ENCODE measurements at regions of chr2 and their contacts with region 1.

Region 1: DNA sequence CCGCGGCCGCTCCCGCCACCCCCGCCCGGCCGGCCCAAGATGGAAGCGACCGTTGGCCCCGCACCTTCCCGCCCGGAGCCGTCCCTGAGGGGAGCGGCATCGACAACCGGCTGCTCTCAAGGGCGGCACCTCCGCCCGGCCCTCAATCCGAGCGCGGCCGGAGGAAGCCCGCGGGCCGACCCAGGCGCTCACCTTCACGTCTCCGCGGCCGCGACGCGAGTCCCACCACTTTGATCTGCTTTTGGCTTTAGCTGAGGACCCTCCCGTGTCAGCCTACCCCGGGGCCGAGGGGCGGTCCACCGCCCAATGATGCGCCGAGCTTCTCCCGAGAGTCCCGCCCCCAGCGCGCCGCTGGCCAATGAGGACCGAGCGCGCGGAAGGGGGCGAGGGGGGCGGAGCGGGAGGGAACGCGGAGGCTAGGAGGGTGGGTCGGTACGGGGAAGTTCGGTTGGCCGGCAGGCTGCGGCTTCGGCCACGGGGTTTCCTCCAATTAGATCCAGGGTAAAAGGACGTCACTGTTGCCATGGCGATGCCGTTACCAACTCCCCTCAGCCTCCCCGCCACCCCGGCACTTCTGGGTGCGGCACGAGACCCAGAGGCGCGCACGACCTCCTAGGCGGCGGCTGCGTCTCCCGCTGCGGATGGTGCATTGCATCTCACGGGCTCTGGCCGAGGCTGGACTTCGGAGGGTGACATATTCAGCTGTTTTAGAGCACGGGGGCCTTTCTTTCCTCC is at the start of gene YWHAQ:
- DNase-seq: peak; percentile 97 to 98 (median 97)
- H3K4me3 ChIP-seq: peak within 1 kb of the TSS; percentile 45 to 86
- H3K4me3 Mint-ChIP-seq: peak within 1 kb of the TSS; percentile 94 to 98 (median 96)
- H3K27ac ChIP-seq: peak within 1 kb of the TSS; percentile 86
- H3K27ac Mint-ChIP-seq: peak within 1 kb of the TSS; percentile 96 to 98 (median 98)
- H3K4me1 ChIP-seq: peaks cover 46% of the 10 kb centered on the region
- H3K4me1 Mint-ChIP-seq: peaks cover 37 to 58% (median 46%) of the 10 kb centered on the region in 4 donors
- H3K27me3 ChIP-seq: no peaks in the 10 kb centered on the region
- H3K27me3 Mint-ChIP-seq: no peaks in the 10 kb centered on the region
- total RNA-seq, gene YWHAQ: 124 TPM

Region 2: DNA sequence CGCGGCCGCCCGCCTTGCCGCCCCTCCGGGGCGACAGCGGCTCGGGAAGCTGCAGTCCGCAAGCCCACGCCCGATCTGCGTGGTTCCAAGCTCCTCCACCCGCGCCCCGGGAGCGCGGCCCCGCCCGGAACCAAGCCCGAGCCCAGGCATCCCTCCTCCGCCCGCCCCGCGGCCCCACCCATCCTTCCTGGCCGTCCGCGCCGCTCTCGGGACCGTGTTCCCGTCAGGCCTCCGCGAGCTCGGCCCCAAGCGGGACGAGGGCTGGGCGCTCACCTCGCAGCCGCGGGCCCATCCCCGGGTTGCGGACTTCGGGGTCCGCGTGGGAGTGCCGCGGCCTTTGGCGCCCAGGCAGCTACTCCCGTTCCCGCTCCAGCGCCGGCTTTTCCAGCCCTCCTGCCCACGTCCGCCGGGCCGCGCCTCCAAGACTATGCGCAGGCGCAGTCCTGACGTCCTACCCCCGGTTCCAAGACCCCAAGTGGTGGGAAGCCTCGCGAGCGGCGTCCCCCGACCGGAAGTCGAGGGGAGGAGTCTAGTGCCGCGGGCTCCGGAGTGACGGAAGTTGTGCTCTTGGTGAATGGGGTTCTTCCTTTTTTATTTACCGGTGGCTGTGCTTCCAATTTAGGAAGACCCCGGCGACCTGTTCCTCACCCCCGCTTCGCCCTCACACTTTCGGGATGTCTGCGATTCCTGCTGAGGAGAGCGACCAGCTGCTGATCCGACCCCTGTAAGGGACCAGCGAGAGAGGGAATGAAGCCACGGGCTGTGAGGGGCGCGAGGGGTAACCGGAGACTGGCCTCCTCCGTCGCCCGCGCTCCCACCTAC is 207.6 kb before region 1 on chr2 and contains the starts of genes CPSF3 and ITGB1BP1:
- CTCF ChIA-PET with region 1: no interaction called
- POLR2A ChIA-PET with region 1: interaction called, 14 read pairs
- intact Hi-C with region 1: loop called (anchors 1 kb)
- DNase-seq: peak; percentile 93 to 95 (median 94)
- H3K4me3 ChIP-seq: peak within 1 kb of the TSS; percentile 77 to 97
- H3K4me3 Mint-ChIP-seq: peak within 1 kb of the TSS in 5 of 8 donors; percentile 91 to 93 (median 91)
- H3K27ac ChIP-seq: peak within 1 kb of the TSS; percentile 88
- H3K27ac Mint-ChIP-seq: peak within 1 kb of the TSS in 6 of 7 donors; percentile 85 to 95 (median 94)
- H3K4me1 ChIP-seq: peaks cover 43% of the 10 kb centered on the region
- H3K4me1 Mint-ChIP-seq: peaks cover 24 to 30% (median 28%) of the 10 kb centered on the region in 4 donors
- H3K27me3 ChIP-seq: no peaks in the 10 kb centered on the region
- H3K27me3 Mint-ChIP-seq: no peaks in the 10 kb centered on the region
- total RNA-seq, gene CPSF3: 20.9 to 22.4 TPM
- total RNA-seq, gene ITGB1BP1: 55.1 to 55.8 TPM

Region 3: DNA sequence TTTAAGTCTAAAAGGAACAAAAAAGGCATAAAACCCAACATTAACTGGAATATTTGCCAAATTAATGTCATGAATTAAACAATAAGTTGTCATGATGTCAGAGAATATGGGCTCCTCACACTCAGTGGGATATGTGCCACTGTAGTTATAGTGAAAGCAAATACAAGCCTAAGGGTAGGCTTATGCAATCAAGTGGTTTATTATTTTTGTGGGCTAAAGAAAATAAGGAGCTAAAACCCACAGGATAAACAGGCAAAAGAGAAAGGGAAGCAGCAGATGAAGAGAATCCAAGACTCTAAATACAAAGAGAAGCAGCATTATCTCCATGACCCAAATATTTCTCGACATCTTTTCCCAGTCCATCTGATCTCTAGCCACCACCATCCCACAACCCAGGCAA is 17.6 kb before region 1 on chr2:
- CTCF ChIA-PET with region 1: interaction called, 3 read pairs
- POLR2A ChIA-PET with region 1: interaction called, 87 read pairs
- intact Hi-C with region 1: loop called (anchors 2 kb)
- DNase-seq: no peak
- H3K4me3 ChIP-seq: no peak overlapping the region
- H3K4me3 Mint-ChIP-seq: peak overlapping the region in 1 of 8 donors; percentile 39
- H3K27ac ChIP-seq: no peak overlapping the region
- H3K27ac Mint-ChIP-seq: peak overlapping the region in 3 of 7 donors; percentile 14 to 63 (median 22)
- H3K4me1 ChIP-seq: peaks cover 85% of the 10 kb centered on the region
- H3K4me1 Mint-ChIP-seq: peaks cover 71 to 98% (median 86%) of the 10 kb centered on the region in 4 donors
- H3K27me3 ChIP-seq: no peaks in the 10 kb centered on the region
- H3K27me3 Mint-ChIP-seq: no peaks in the 10 kb centered on the region

Region 4: DNA sequence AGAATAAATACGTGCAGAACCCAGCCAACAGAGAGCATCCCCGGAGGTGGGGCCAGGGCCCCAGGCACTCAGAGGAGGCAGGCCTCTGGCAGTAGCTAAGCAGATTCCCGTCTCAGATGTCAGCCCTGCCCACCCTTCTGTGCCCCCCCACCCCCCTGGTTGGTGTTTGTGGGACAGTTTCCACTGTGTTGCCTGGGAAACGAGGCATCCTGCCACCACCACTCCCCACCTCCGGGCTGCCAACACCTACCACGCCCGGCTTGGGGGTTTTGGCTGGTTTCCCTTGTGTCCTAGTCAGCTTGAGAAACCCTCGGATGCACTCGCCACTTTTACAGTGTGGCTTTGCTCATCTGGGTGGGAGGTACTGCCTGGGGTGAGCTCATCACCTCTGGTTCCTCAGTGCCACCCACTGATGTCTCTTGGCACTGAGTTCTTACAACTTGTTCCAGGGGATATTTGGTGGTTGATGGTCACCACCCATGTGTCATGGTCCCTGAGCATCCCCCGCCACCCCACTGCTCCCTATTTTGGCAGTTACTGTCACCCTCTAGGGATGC is 72.2 kb after region 1 on chr2:
- CTCF ChIA-PET with region 1: interaction called, 3 read pairs
- POLR2A ChIA-PET with region 1: interaction called, 43 read pairs
- intact Hi-C with region 1: loop called (anchors 1 kb)
- DNase-seq: peak; percentile 89 to 98 (median 94)
- H3K4me3 ChIP-seq: no peak overlapping the region
- H3K4me3 Mint-ChIP-seq: peak overlapping the region in 7 of 8 donors; percentile 11 to 80 (median 55)
- H3K27ac ChIP-seq: peak overlapping the region; percentile 88
- H3K27ac Mint-ChIP-seq: peak overlapping the region; percentile 94 to 98 (median 97)
- H3K4me1 ChIP-seq: peaks cover 50% of the 10 kb centered on the region
- H3K4me1 Mint-ChIP-seq: peaks cover 35 to 83% (median 52%) of the 10 kb centered on the region in 4 donors
- H3K27me3 ChIP-seq: no peaks in the 10 kb centered on the region
- H3K27me3 Mint-ChIP-seq: no peaks in the 10 kb centered on the region

Region 5: GRCh38 chr2:9753276-9753600 is 122.3 kb after region 1 on chr2:
- CTCF ChIA-PET with region 1: no interaction called
- POLR2A ChIA-PET with region 1: interaction called, 58 read pairs
- intact Hi-C with region 1: loop called (anchors 1 kb)
- DNase-seq: peak in 4 of 5 donors; percentile 35 to 79 (median 48)
- H3K4me3 ChIP-seq: peak overlapping the region in 1 of 2 donors; percentile 52
- H3K4me3 Mint-ChIP-seq: peak overlapping the region; percentile 80 to 96 (median 94)
- H3K27ac ChIP-seq: peak overlapping the region; percentile 53
- H3K27ac Mint-ChIP-seq: peak overlapping the region; percentile 90 to 100 (median 99)
- H3K4me1 ChIP-seq: peaks cover 49% of the 10 kb centered on the region
- H3K4me1 Mint-ChIP-seq: peaks cover 29 to 72% (median 50%) of the 10 kb centered on the region in 4 donors
- H3K27me3 ChIP-seq: no peaks in the 10 kb centered on the region
- H3K27me3 Mint-ChIP-seq: no peaks in the 10 kb centered on the region

Region 6: DNA sequence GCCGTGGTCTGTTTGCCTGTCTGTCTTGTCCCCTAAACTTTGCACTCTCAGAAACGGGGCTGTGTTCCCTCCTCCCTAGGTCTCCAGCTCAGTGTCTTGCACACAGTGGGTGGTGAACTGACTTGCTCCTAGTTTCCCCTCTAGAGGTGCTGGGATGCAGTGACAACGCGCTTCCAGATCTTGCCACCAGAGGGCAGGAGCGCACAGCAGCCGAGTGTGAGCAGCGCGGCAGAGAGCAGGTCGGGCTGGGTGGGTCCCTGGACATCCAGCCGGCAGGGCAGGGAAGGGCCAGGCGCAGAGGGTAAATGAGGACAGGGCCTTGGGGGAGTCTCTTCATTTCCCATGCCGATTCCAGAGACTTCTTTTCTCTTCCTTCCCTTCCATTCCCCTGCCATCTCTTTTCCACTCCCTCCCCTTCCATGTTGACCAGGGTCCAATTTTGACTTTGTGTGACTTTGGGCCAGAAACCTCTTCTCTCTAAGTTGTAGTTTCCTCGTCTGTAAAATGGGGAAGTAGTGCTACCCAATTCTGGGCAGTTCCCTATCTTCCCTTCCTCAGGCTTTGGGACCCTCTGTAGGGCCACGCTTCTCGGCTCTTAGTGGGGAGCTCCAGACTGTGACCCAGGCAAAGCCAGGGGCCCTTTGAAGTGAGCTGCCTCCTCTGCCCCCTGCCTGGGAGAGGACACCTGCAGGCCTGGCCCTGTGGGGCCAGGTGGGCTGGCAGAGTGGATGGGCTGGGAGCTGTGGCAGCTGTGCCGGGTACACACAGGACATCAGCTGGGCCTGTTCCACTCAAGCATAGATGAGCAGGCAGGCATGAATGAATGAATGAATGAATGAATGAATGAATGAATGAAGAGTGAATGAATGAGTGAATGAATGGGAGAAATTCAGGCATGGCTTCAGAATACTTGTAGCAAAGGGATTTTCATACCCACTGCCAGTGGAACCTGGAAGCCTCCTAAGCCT is 169.0 kb after region 1 on chr2:
- CTCF ChIA-PET with region 1: no interaction called
- POLR2A ChIA-PET with region 1: interaction called, 6 read pairs
- intact Hi-C with region 1: loop called (anchors 1 kb)
- DNase-seq: peak; percentile 76 to 84 (median 79)
- H3K4me3 ChIP-seq: peak overlapping the region in 1 of 2 donors; percentile 21
- H3K4me3 Mint-ChIP-seq: peak overlapping the region; percentile 71 to 96 (median 89)
- H3K27ac ChIP-seq: peak overlapping the region; percentile 75
- H3K27ac Mint-ChIP-seq: peak overlapping the region; percentile 92 to 98 (median 93)
- H3K4me1 ChIP-seq: peaks cover 36% of the 10 kb centered on the region
- H3K4me1 Mint-ChIP-seq: peaks cover 21 to 48% (median 33%) of the 10 kb centered on the region in 4 donors
- H3K27me3 ChIP-seq: no peaks in the 10 kb centered on the region
- H3K27me3 Mint-ChIP-seq: no peaks in the 10 kb centered on the region

Measured in CD4-positive, alpha-beta memory T cell (primary cell).